ENCODE measurements at regions of chr11 and their contacts with region 1.

Region 1: GRCh38 chr11:34948696-34949095 is 32.3 kb downstream of the PDHX start:
- DNase-seq: peak in 1 of 9 experiments; percentile 6
- ATAC-seq: no peak
- H3K4me3 ChIP-seq: no peak overlapping the region
- H3K4me3 Mint-ChIP-seq: no peak overlapping the region
- H3K27ac ChIP-seq: no peak overlapping the region
- H3K27ac Mint-ChIP-seq: no peak overlapping the region
- H3K4me1 ChIP-seq: no peaks in the 10 kb centered on the region
- H3K4me1 Mint-ChIP-seq: peaks cover 6% of the 10 kb centered on the region
- H3K27me3 ChIP-seq: no peaks in the 10 kb centered on the region
- H3K27me3 Mint-ChIP-seq: no peaks in the 10 kb centered on the region
- CTCF ChIP-seq: no peak

Region 2: DNA sequence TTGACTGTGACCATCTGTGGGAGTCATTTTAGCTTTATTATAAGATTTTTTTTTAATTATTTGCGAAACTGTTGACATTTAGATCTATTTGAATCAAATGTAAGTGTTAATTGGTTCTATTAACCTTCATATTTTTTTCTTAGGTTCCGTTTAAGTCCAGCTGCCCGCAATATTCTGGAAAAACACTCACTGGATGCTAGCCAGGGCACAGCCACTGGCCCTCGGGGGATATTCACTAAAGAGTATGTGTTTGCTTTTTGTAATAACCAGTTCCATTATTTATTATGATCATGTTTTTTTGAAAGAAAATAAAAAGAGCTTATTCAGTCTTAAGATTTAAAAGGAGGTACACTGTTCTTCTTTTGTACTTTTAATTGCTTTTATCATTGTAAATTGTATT is 11.6 kb after region 1 on chr11:
- CTCF ChIA-PET with region 1: no interaction called
- POLR2A ChIA-PET with region 1: no interaction called
- intact Hi-C with region 1: loop called in 1 of 2 experiments (anchors 2 kb)
- DNase-seq: no peak
- ATAC-seq: no peak
- H3K4me3 ChIP-seq: no peak overlapping the region
- H3K4me3 Mint-ChIP-seq: no peak overlapping the region
- H3K27ac ChIP-seq: no peak overlapping the region
- H3K27ac Mint-ChIP-seq: no peak overlapping the region
- H3K4me1 ChIP-seq: no peaks in the 10 kb centered on the region
- H3K4me1 Mint-ChIP-seq: no peaks in the 10 kb centered on the region
- H3K27me3 ChIP-seq: no peaks in the 10 kb centered on the region
- H3K27me3 Mint-ChIP-seq: no peaks in the 10 kb centered on the region
- CTCF ChIP-seq: no peak

Measured in CD8-positive, alpha-beta T cell (primary cell).